Activated CD8-positive, alpha-beta T cell treated with anti-CD3 and anti-CD28 coated beads for 36 hours (primary cell): ENCODE measurements at regions of chr12 and their contacts with region 1.

Region 1: DNA sequence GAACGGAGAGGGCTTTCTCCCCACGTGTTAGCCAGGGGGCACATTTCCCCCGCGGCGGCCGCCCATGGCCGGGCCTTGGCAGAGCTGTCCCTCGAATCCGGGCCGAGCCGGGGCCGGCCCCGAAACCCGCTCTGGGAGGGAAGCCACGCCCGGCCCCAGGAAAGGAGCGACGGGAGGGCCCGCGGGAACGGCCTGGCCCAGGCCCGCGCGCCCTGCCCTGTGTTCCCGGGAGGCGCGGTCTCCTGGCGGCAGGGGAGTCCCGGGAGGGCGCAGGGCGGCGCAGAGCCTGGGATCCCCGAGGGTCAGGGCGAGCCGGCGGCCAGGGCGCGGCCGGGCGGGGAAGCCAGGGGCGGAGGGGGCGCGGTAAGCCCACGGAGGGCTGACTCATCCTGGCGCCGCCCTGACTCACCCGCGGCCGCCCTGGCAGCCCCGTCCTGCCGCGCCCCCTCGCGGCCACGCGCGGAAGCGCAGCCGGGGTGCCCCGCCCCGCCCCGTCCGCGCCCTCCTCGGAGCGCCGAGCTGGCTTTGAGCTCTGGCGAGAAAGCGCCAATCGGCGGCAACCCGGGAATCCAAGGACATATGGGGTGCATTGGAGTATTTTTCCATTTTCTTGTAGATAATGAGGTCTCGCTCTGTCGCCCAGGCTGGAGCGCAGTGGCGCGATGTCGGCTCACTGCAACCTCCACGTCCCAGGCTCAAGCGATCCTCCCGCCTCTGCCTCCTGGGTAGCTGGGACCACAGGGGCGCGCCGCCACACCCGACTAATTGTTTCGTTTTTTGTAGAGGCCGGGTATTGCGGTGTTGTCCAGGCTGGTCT is 31.8 kb upstream of the PLEKHG6 start:
- DNase-seq: peak; percentile 84
- ATAC-seq: peak; percentile 98
- H3K4me3 Mint-ChIP-seq: peak overlapping the region; percentile 72
- H3K27ac Mint-ChIP-seq: peak overlapping the region; percentile 78
- H3K4me1 Mint-ChIP-seq: peaks cover 5% of the 10 kb centered on the region
- H3K27me3 Mint-ChIP-seq: peaks cover 21% of the 10 kb centered on the region
- CTCF ChIP-seq: peak; percentile 82

Region 2: GRCh38 chr12:5988659-5989116 is 290.0 kb before region 1 on chr12:
- CTCF ChIA-PET with region 1: interaction called, 18 read pairs
- POLR2A ChIA-PET with region 1: no interaction called
- intact Hi-C with region 1: loop called (anchors 10 kb)
- DNase-seq: peak; percentile 83
- ATAC-seq: peak; percentile 93
- H3K4me3 Mint-ChIP-seq: no peak overlapping the region
- H3K27ac Mint-ChIP-seq: no peak overlapping the region
- H3K4me1 Mint-ChIP-seq: no peaks in the 10 kb centered on the region
- H3K27me3 Mint-ChIP-seq: no peaks in the 10 kb centered on the region
- CTCF ChIP-seq: peak; percentile 97

Region 3: DNA sequence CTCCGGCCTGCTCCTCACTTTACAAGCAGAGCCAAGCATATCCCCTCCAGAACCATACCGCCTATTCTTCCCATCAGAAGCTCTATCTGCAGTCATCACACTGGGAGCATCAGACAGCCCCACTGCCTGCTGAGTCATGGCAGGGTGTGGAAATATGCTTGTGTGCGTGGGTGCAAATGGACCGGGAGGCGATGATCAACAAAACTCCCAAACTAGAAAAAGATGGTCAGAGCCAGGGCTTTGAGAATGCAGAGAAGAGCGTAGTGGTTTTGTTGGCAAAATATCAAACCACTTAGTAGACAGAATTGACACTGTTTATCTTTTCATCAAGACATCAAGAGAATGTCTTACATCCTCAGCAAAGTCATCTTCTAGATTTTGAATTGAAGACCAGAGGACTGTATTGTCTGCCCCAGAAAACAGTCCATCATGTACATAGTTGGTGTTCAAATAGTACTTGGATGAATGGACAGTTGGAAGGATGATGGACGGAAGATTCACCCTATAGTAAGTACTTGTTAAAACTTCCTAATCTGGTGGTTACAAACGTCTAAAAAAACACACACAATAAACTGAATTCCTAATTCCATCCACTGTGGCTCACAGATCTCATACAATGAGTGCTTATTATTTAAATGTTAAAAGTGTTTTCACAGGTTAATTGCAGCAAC is 209.1 kb before region 1 on chr12:
- CTCF ChIA-PET with region 1: interaction called, 15 read pairs
- POLR2A ChIA-PET with region 1: no interaction called
- intact Hi-C with region 1: no loop called
- DNase-seq: peak; percentile 48
- ATAC-seq: peak; percentile 34
- H3K4me3 Mint-ChIP-seq: no peak overlapping the region
- H3K27ac Mint-ChIP-seq: no peak overlapping the region
- H3K4me1 Mint-ChIP-seq: peaks cover 24% of the 10 kb centered on the region
- H3K27me3 Mint-ChIP-seq: peaks cover 8% of the 10 kb centered on the region
- CTCF ChIP-seq: no peak

Region 4: GRCh38 chr12:6116175-6117021 is 162.2 kb before region 1 on chr12:
- CTCF ChIA-PET with region 1: no interaction called
- POLR2A ChIA-PET with region 1: no interaction called
- intact Hi-C with region 1: no loop called
- DNase-seq: no peak
- ATAC-seq: no peak
- H3K4me3 Mint-ChIP-seq: no peak overlapping the region
- H3K27ac Mint-ChIP-seq: no peak overlapping the region
- H3K4me1 Mint-ChIP-seq: no peaks in the 10 kb centered on the region
- H3K27me3 Mint-ChIP-seq: no peaks in the 10 kb centered on the region
- CTCF ChIP-seq: no peak

Region 5: DNA sequence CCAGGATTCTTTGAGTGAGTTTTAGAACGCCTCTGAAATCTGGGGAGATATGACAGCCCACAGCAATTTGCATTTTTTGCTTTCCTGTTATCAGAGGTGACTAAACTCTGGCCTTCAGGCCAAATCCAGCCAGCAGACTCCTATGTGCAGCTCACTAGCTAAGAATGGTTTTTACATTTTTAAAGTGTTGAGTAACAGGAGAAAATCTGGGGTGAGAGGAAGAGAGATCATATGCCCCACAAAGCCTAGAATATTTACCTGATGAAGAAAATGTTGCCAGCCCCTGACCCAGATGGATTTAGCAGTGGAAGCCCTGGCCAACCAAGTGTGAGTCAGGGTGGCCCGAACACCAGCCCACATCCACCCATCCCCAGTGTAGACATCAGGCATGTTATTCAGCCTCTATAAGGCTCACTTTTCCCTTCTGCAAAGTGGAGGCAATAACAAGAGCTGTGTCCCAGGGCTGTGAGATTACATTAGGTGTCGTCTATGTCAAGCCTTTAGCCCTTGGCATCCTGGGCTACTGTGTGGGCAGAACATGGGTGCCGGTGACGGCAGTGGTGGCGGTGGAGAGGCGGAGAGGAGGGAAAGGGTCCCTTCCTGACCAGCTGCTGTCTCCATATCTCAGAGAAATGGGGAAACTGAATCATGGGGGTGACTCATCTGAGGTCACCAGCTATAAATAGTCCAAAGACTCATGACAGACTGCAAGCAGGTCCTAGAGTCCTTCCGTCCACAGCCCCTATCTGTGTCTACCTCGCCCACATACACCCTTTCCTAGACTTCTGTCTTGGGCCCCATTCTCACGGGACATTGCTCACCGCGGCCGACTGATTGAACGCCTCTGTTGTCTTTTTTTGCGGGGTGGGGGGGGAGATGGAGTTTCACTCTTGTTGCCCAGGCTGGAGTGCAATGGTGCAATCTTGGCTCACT is 111.1 kb before region 1 on chr12:
- CTCF ChIA-PET with region 1: interaction called, 10 read pairs
- POLR2A ChIA-PET with region 1: interaction called, 3 read pairs
- intact Hi-C with region 1: no loop called
- DNase-seq: peak; percentile 90
- ATAC-seq: peak; percentile 87
- H3K4me3 Mint-ChIP-seq: peak overlapping the region; percentile 33
- H3K27ac Mint-ChIP-seq: peak overlapping the region; percentile 94
- H3K4me1 Mint-ChIP-seq: peaks cover 31% of the 10 kb centered on the region
- H3K27me3 Mint-ChIP-seq: no peaks in the 10 kb centered on the region
- CTCF ChIP-seq: no peak

Region 6: DNA sequence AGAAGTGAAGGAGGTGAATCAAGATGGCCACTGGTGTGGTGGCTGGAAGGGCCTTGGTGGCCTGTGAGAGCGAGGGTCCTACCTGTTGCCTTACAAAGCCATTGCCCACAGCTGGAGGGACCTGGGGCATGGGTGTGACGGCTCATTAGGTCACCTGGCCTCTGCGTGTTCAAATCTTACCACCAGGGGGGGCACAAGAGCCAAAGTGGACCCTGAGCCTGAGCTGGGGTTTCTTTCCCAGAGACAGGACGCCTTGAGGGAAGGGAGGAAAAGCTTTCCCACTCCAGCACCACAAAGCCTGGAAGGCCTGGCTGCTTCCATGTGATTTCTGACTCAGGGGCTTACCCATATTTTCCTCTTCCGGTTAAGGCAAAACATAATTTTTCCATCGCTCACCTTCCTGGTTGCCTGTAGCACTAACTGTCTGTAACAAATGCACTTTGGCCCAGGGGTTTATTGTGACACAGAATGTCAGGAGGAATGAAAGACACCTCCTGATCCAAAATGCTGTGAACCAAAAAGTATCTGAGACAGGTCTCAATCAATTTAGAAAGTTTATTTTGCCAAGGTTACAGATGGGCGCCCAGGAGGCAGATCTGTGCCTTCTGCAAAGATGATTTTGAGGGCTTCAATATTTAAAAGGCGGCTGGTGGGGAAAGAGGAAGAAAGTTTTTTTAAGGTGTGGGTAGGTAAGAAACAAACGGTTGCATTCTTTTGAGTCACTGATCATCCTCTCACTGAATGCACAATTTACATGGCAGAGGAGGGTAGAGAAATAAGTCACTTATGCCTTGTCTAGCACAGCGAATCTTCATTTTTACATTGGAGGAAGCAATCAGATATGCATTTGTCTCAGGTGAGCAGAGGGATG is 82.7 kb before region 1 on chr12:
- CTCF ChIA-PET with region 1: interaction called, 160 read pairs
- POLR2A ChIA-PET with region 1: interaction called, 3 read pairs
- intact Hi-C with region 1: no loop called
- DNase-seq: peak; percentile 85
- ATAC-seq: peak; percentile 83
- H3K4me3 Mint-ChIP-seq: no peak overlapping the region
- H3K27ac Mint-ChIP-seq: peak overlapping the region; percentile 9
- H3K4me1 Mint-ChIP-seq: peaks cover 21% of the 10 kb centered on the region
- H3K27me3 Mint-ChIP-seq: peaks cover 7% of the 10 kb centered on the region
- CTCF ChIP-seq: peak; percentile 79

Region 7: DNA sequence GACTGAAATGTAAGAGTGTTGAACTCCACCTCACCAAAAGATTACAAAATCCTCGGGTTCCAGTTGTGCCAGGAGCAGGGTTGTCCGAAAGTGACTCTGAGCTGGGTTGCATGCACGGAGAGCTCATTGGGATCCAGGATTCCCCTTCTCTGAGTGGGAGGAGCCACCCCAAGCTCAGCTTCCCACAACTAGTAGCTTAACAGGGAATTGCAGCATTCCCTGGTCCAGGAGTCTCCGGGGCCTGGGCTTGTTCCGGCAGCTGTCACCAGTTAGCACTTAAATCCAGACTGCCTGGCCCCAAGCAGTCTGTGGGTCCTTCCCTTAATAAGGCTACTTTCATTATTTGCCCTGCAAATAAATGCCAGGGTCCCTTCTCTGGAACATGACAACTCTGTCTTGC is 28.3 kb before region 1 on chr12:
- CTCF ChIA-PET with region 1: interaction called, 11 read pairs
- POLR2A ChIA-PET with region 1: no interaction called
- intact Hi-C with region 1: no loop called
- DNase-seq: no peak
- ATAC-seq: no peak
- H3K4me3 Mint-ChIP-seq: no peak overlapping the region
- H3K27ac Mint-ChIP-seq: no peak overlapping the region
- H3K4me1 Mint-ChIP-seq: no peaks in the 10 kb centered on the region
- H3K27me3 Mint-ChIP-seq: peaks cover 2% of the 10 kb centered on the region
- CTCF ChIP-seq: no peak